Activated naive CD4-positive, alpha-beta T cell treated with anti-CD3 and anti-CD28 coated beads for 36 hours (primary cell): ENCODE measurements at regions of chr17 and their contacts with region 1.

Region 1: DNA sequence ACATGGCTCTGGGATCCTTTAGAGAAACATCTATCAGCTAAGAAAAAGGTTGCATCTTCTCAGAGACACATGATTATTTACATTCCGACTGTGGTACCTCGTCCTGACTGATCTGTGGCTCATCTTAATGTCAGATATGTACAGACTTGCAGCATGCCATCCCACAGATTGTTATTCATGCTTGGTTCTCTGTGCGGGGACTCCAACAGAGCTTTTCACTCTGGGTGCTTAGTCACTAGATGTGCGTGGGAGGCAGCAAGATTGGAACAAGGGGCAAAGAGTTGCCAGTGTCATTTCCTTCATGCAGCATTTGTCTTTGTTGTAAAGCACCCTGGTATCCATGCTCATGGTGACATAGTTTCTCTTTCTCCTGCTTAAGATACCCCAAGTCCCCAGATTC is 179.1 kb upstream of the CACNG5 start:
- DNase-seq: peak; percentile 82
- H3K4me3 Mint-ChIP-seq: no peak overlapping the region
- H3K27ac Mint-ChIP-seq: peak overlapping the region; percentile 6
- H3K4me1 Mint-ChIP-seq: peaks cover 54% of the 10 kb centered on the region
- H3K27me3 Mint-ChIP-seq: no peaks in the 10 kb centered on the region

Region 2: DNA sequence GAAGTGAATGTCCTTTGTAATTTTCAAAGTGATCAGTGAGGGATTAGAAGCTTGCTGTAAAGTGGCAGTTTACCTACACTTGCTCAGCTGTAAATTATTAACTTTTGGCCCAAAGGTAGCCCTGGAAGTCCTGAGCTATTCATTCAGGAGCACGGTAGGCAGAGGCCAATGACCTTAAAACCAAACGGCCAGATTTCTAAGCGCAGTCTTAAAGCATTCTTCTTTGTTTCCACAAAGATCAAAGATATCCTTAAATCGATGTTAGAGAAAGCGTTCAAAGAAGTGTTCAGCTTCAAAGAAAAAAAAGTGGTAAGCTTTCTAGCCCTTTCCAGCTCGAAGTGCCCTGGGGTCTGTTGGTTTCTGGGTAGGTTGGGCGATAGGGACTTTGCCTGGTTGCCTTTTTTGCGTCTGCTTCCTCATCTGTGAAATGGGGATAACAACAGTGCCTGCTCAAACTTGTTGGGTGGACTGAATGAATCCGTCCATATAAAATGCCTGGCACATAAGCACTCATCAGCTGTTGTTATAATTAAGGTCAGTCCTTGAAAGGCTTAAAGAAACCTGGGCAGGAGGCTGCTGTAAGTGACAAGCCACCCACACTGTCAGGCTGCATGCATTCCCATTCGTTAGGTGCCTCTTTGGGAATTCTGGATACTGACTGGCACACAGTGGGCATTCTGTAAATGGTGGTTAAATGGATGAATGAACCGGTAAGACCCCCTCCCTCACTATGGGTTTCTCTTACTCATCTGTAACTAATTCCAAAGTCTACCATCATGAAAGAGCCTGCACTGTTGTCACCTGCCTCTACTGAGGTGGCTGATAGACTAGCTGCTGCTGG is 240.3 kb before region 1 on chr17:
- CTCF ChIA-PET with region 1: no interaction called
- intact Hi-C with region 1: no loop called
- DNase-seq: no peak
- H3K4me3 Mint-ChIP-seq: no peak overlapping the region
- H3K27ac Mint-ChIP-seq: no peak overlapping the region
- H3K4me1 Mint-ChIP-seq: peaks cover 77% of the 10 kb centered on the region
- H3K27me3 Mint-ChIP-seq: no peaks in the 10 kb centered on the region

Region 3: DNA sequence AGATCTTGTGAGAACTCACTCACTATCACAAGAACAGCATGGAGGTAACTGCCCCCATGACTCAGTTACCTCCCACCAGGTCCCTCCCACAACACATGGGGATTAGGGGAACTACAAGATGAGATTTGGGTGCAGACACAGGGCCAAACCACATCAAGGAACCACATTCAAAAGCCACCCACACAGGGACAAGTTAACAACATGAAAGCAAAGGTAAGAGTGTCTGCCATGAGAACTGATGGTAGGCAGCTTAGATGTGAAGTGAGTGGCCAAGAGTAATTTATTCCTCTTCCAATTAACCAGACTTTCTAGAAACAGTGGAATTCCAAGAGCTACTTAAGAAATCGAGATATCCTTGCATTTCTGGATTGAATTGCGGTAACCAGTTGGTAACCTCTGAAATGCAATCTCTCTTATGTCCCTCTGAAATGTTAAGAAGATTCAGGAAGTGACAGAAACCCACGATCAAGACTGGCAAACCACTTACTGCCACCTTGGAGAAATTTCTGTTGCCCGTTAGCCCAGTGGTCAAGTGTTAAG is 11.7 kb after region 1 on chr17:
- CTCF ChIA-PET with region 1: no interaction called
- intact Hi-C with region 1: loop called (anchors 1 kb)
- DNase-seq: peak; percentile 89
- H3K4me3 Mint-ChIP-seq: no peak overlapping the region
- H3K27ac Mint-ChIP-seq: no peak overlapping the region
- H3K4me1 Mint-ChIP-seq: peaks cover 78% of the 10 kb centered on the region
- H3K27me3 Mint-ChIP-seq: no peaks in the 10 kb centered on the region

Region 4: GRCh38 chr17:66799849-66800537 is 144.1 kb after region 1 on chr17:
- CTCF ChIA-PET with region 1: no interaction called
- intact Hi-C with region 1: no loop called
- DNase-seq: no peak
- H3K4me3 Mint-ChIP-seq: no peak overlapping the region
- H3K27ac Mint-ChIP-seq: no peak overlapping the region
- H3K4me1 Mint-ChIP-seq: peaks cover 8% of the 10 kb centered on the region
- H3K27me3 Mint-ChIP-seq: no peaks in the 10 kb centered on the region